GM10248 (cell line): ENCODE measurements at regions of chr11 and their contacts with region 1.

Region 1: GRCh38 chr11:73661035-73661628 is 14.8 kb downstream of the PLEKHB1 start:
- DNase-seq: peak; percentile 96
- CTCF ChIP-seq: peak; percentile 99

Region 2: GRCh38 chr11:73335204-73335923 is 325.8 kb before region 1 on chr11:
- CTCF ChIA-PET with region 1: interaction called, 34 read pairs
- POLR2A ChIA-PET with region 1: no interaction called
- DNase-seq: peak; percentile 84
- CTCF ChIP-seq: peak; percentile 99

Region 3: GRCh38 chr11:73384872-73385689 is 276.1 kb before region 1 on chr11:
- CTCF ChIA-PET with region 1: interaction called, 11 read pairs
- POLR2A ChIA-PET with region 1: no interaction called
- DNase-seq: peak; percentile 83
- CTCF ChIP-seq: no peak

Region 4: GRCh38 chr11:73478738-73479347 is 182.3 kb before region 1 on chr11:
- CTCF ChIA-PET with region 1: interaction called, 15 read pairs
- POLR2A ChIA-PET with region 1: no interaction called
- DNase-seq: no peak
- CTCF ChIP-seq: peak; percentile 53

Region 5: GRCh38 chr11:73647459-73648100 is 13.6 kb before region 1 on chr11:
- CTCF ChIA-PET with region 1: interaction called, 75 read pairs
- POLR2A ChIA-PET with region 1: no interaction called
- DNase-seq: peak; percentile 91
- CTCF ChIP-seq: no peak